CD14-positive monocyte (primary cell): ENCODE measurements at regions of chr5 and their contacts with region 1.

Region 1: DNA sequence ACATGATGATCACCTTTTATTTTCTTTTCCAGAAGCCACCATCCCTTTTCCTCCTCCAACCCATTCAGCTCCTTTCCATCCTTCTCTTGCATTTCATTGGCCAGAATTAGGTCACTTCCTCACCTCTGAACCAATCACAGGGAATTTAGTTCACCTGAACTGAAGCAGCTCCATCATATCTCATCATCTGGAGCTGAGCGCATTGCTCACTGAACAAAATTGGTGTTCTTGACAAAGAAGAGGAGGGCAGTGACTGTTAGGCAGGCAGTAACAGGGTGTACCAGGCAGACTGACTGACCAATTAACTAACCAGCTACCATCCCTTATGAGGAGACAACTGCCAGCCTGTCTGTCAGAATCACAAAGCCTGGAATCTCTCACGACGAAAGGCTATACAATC is 1.8 kb upstream of the ZNF354A start:
- DNase-seq: no peak
- H3K4me3 ChIP-seq: peak overlapping the region in 1 of 3 experiments; percentile 80
- H3K4me3 Mint-ChIP-seq: peak overlapping the region in 1 of 2 donors; percentile 6
- H3K27ac ChIP-seq: peak overlapping the region in 1 of 2 donors; percentile 66
- H3K27ac Mint-ChIP-seq: peak overlapping the region in 5 of 7 donors; percentile 33 to 87 (median 73)
- H3K4me1 ChIP-seq: peaks cover 13 to 22% of the 10 kb centered on the region in 2 donors
- H3K4me1 Mint-ChIP-seq: peaks cover 26% of the 10 kb centered on the region
- H3K27me3 ChIP-seq: no peaks in the 10 kb centered on the region
- H3K27me3 Mint-ChIP-seq: peaks cover 0 to 2% (median 1%) of the 10 kb centered on the region in 3 donors
- CTCF ChIP-seq: no peak

Region 2: DNA sequence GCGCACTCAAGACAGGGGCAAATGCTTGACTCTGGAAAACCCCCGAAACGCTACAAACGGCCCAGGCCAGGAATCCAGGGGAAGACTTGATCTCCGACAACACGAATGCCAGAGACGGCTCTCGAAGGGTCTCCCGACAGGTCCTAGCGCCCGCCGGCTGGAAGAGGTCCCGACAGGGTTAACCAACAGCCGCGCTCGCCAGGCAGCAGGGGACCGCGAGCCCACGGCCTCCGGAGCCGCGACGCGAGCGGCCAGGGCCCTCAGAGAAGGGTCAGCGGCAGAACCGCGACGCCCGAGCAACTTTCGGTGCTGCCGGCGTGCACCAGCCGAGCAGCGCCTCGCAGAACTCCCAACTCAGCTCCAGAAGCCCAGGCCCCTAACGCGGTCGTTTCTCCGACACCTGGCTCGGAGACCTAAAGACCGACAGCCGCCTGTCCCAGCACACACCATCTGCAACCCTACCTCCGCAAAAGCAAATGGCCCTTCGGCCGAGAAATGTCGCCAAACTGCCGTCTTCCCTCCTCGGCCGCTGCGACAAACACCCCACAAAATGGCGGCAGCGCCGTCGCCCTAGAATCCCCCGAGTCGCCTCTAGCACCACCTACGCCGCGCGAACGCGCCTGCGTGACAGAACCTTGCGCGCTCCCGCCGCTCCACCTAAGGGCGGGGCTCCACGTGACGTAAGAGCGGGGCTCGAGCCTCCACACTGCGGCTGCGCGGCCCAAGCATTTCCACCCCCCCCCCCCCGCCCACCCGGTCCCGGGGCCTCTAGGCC is 105.6 kb before region 1 on chr5 and contains the start of gene CLK4:
- intact Hi-C with region 1: loop called (anchors 5 kb)
- DNase-seq: peak; percentile 94 to 96 (median 96)
- H3K4me3 ChIP-seq: peak within 1 kb of the TSS; percentile 63 to 97 (median 74)
- H3K4me3 Mint-ChIP-seq: peak within 1 kb of the TSS; percentile 98
- H3K27ac ChIP-seq: peak within 1 kb of the TSS; percentile 95 to 98
- H3K27ac Mint-ChIP-seq: peak within 1 kb of the TSS; percentile 97 to 99 (median 98)
- H3K4me1 ChIP-seq: peaks cover 23 to 27% of the 10 kb centered on the region in 2 donors
- H3K4me1 Mint-ChIP-seq: peaks cover 27% of the 10 kb centered on the region
- H3K27me3 ChIP-seq: no peaks in the 10 kb centered on the region
- H3K27me3 Mint-ChIP-seq: peaks cover 0 to 4% (median 3%) of the 10 kb centered on the region in 3 donors
- CTCF ChIP-seq: no peak
- polyA plus RNA-seq, gene CLK4: 3.0 to 46.9 (median 4.9) TPM

Region 3: DNA sequence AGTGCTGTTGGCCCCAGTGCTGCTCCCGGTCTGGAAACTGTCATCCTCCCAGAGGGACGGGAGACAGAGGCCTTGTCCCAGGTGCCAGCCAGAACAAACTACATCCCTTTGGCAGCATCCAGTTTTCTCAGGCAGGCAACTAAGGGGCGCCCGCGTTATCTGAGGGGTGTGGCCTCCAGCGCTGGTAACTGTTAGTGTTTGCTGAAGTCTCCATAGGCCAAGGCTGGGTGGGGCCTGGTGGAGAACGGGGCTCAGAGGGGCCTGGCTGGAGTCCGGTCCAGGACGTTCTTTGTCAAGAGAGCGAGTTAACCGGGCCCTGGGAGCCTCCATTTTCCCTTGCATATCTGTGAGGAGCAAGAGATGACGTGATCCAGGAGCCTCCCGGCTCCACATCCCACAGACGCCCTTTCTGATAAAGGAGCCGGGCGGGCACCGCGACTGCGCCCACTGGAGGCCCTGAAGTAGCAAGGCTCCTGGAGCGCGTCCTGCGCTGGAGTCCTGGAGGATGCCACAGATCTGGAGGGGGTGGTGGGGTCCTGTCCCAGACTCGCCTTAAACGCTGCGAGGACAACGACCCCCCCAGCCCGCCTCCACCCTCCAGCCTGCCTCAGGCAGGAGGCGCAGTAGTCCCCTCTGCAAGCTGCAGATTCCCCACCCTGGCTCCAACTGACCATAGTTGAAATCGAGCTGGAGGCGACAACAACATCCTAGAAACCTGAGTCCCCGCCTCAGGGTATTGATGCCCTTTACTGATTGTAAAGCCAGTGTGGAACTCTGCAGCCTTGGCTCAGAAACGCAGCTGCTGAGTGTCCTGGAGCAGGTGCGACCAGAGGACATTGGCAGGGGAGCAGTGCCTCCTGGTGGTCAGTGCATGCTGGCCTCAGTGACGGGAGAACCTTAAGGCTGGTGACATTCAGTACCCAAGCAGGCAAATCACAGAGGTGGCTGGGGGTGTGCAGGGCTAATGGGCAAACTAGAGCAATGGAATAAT is 106.7 kb after region 1 on chr5:
- intact Hi-C with region 1: loop called (anchors 5 kb)
- DNase-seq: peak; percentile 44 to 64 (median 60)
- H3K4me3 ChIP-seq: no peak overlapping the region
- H3K4me3 Mint-ChIP-seq: no peak overlapping the region
- H3K27ac ChIP-seq: no peak overlapping the region
- H3K27ac Mint-ChIP-seq: no peak overlapping the region
- H3K4me1 ChIP-seq: no peaks in the 10 kb centered on the region
- H3K4me1 Mint-ChIP-seq: no peaks in the 10 kb centered on the region
- H3K27me3 ChIP-seq: no peaks in the 10 kb centered on the region
- H3K27me3 Mint-ChIP-seq: peaks cover 2 to 8% (median 4%) of the 10 kb centered on the region in 3 donors
- CTCF ChIP-seq: peak; percentile 71

Region 4: GRCh38 chr5:178859625-178860531 is 127.6 kb after region 1 on chr5 and contains the start of gene ZNF354B:
- intact Hi-C with region 1: loop called (anchors 5 kb)
- DNase-seq: peak; percentile 82 to 87 (median 84)
- H3K4me3 ChIP-seq: peak within 1 kb of the TSS; percentile 46 to 82 (median 80)
- H3K4me3 Mint-ChIP-seq: peak within 1 kb of the TSS; percentile 83 to 94
- H3K27ac ChIP-seq: peak within 1 kb of the TSS in 1 of 2 donors; percentile 62
- H3K27ac Mint-ChIP-seq: peak within 1 kb of the TSS in 6 of 7 donors; percentile 27 to 79 (median 68)
- H3K4me1 ChIP-seq: peaks cover 2 to 5% of the 10 kb centered on the region in 2 donors
- H3K4me1 Mint-ChIP-seq: peaks cover 12% of the 10 kb centered on the region
- H3K27me3 ChIP-seq: no peaks in the 10 kb centered on the region
- H3K27me3 Mint-ChIP-seq: peaks cover 0 to 5% (median 3%) of the 10 kb centered on the region in 3 donors
- CTCF ChIP-seq: no peak
- polyA plus RNA-seq, gene ZNF354B: 0.94 to 12.0 (median 1.1) TPM

Region 5: GRCh38 chr5:178872302-178872701 is 140.0 kb after region 1 on chr5:
- intact Hi-C with region 1: no loop called
- DNase-seq: no peak
- H3K4me3 ChIP-seq: no peak overlapping the region
- H3K4me3 Mint-ChIP-seq: no peak overlapping the region
- H3K27ac ChIP-seq: no peak overlapping the region
- H3K27ac Mint-ChIP-seq: no peak overlapping the region
- H3K4me1 ChIP-seq: no peaks in the 10 kb centered on the region
- H3K4me1 Mint-ChIP-seq: no peaks in the 10 kb centered on the region
- H3K27me3 ChIP-seq: no peaks in the 10 kb centered on the region
- H3K27me3 Mint-ChIP-seq: no peaks in the 10 kb centered on the region
- CTCF ChIP-seq: no peak

Region 6: DNA sequence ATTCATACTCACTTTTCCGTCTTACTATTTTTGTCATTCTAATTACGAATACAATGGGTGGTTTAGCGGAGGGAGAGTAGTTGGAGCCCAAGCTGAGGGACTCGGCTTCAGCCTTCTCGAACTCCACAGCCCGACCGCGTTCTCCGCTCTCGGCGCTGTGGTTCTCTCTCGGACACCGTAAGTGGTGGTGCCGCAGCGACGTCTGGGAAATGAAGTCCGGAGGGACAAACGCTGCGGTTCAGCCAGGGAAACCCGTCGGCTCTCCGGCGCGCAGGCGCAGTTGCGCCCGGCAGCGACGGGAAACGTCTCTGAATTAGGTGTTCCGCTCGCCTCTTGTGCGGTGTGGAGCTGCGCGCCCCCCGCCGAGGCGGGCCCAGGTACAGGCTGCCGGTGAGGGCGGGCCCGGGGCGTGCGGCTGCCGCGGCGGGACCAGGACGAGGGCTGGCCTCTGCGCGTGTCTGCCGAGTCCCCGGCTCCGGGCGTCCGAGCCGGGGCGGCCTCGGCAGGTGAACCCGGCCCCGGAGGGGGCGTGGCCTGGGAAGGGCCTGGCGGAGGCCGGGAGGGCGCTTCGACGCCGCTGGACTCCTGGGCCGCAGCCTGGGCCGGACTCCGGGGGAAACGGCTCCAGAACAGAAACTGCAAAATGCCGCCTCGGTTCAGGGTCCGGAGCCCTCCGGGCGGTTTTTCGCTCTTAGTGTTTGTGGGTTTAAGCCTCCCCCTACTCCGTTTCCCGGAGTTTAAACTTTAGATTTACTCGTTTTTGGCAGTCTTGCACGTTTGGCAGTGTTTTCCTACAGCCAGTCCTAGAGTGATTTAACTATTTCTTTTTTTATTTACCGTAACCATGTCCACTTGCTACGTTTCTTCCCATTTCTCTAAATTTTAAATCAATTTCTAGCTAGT is 291.5 kb after region 1 on chr5 and contains the start of gene ZNF879:
- intact Hi-C with region 1: loop called (anchors 5 kb)
- DNase-seq: peak; percentile 88 to 93 (median 91)
- H3K4me3 ChIP-seq: peak within 1 kb of the TSS; percentile 44 to 87 (median 46)
- H3K4me3 Mint-ChIP-seq: peak within 1 kb of the TSS; percentile 93 to 98
- H3K27ac ChIP-seq: peak within 1 kb of the TSS in 1 of 2 donors; percentile 65
- H3K27ac Mint-ChIP-seq: peak within 1 kb of the TSS in 5 of 7 donors; percentile 46 to 87 (median 79)
- H3K4me1 ChIP-seq: peaks cover 13 to 14% of the 10 kb centered on the region in 2 donors
- H3K4me1 Mint-ChIP-seq: peaks cover 15% of the 10 kb centered on the region
- H3K27me3 ChIP-seq: no peaks in the 10 kb centered on the region
- H3K27me3 Mint-ChIP-seq: peaks cover 3 to 7% (median 7%) of the 10 kb centered on the region in 3 donors
- CTCF ChIP-seq: no peak
- polyA plus RNA-seq, gene ZNF879: 0.61 to 1.4 (median 0.71) TPM

Region 7: DNA sequence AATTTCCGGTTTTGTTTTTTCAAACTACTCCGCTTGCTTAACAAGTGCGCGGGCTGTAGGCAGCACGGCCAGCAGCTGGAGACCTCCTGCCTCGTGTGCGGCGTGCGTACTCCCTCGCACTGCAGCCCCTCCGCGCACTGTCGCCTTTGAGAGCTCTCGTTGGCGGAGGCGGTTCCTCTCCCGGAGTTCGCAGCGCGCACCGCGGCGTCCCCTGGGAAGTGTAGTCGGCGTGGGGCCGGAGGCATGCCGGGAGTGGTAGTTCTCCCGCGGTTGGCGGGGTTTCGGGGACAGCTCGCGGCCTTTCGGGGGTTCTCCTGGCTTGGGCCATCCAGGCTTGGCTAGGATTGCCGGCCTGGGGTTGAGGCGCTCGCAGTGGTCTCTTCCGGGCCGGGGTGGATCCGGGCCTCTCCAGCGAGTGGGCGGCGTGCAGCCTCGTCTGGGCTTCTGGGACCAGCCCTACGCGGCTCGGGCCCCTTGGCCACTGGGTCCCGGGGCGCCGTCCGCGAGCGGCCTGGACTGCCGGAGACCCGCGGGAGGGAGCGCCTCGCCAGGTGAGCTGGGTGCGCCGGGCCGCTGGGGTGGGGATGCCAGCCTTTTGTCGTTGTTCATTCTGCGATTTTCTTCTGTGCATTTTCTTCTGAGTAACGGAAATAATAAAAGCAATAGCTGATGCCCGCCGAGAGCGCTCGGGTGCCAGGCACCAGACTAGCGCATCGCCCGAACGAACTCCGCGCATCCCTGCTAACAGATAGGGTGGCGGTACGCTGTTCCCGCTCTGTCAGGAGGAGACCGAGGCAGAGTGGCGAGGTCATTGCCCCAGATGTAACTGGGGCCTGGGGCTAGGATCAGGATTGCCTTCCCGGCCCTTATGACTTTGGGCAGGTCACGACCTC is 328.1 kb after region 1 on chr5 and contains the start of gene ZNF354C:
- intact Hi-C with region 1: loop called in 1 of 2 experiments (anchors 10 kb)
- DNase-seq: peak; percentile 49 to 61 (median 59)
- H3K4me3 ChIP-seq: peak within 1 kb of the TSS; percentile 55 to 87 (median 75)
- H3K4me3 Mint-ChIP-seq: peak within 1 kb of the TSS; percentile 93
- H3K27ac ChIP-seq: peak within 1 kb of the TSS in 1 of 2 donors; percentile 32
- H3K27ac Mint-ChIP-seq: peak within 1 kb of the TSS in 5 of 7 donors; percentile 20 to 63 (median 51)
- H3K4me1 ChIP-seq: peaks cover 6 to 8% of the 10 kb centered on the region in 2 donors
- H3K4me1 Mint-ChIP-seq: peaks cover 11% of the 10 kb centered on the region
- H3K27me3 ChIP-seq: no peaks in the 10 kb centered on the region
- H3K27me3 Mint-ChIP-seq: peaks cover 3 to 6% (median 3%) of the 10 kb centered on the region in 3 donors
- CTCF ChIP-seq: no peak
- polyA plus RNA-seq, gene ZNF354C: 0.25 to 0.48 (median 0.31) TPM